T-cell (primary cell): ENCODE measurements at regions of chr1 and their contacts with region 1.

Region 1: GRCh38 chr1:35320937-35321336 is 52.4 kb downstream of the ZMYM4 start:
- DNase-seq: no peak
- ATAC-seq: no peak
- H3K4me3 ChIP-seq: no peak overlapping the region
- H3K4me3 Mint-ChIP-seq: no peak overlapping the region
- H3K27ac ChIP-seq: no peak overlapping the region
- H3K27ac Mint-ChIP-seq: no peak overlapping the region
- H3K4me1 ChIP-seq: no peaks in the 10 kb centered on the region
- H3K4me1 Mint-ChIP-seq: peaks cover 18 to 32% (median 22%) of the 10 kb centered on the region in 3 donors
- H3K27me3 ChIP-seq: no peaks in the 10 kb centered on the region
- H3K27me3 Mint-ChIP-seq: no peaks in the 10 kb centered on the region

Region 2: GRCh38 chr1:35345439-35345981 is 24.6 kb after region 1 on chr1:
- CTCF ChIA-PET with region 1: no interaction called
- POLR2A ChIA-PET with region 1: interaction called in 1 of 2 experiments, 10 read pairs
- DNase-seq: no peak
- ATAC-seq: no peak
- H3K4me3 ChIP-seq: no peak overlapping the region
- H3K4me3 Mint-ChIP-seq: no peak overlapping the region
- H3K27ac ChIP-seq: no peak overlapping the region
- H3K27ac Mint-ChIP-seq: no peak overlapping the region
- H3K4me1 ChIP-seq: peaks cover 0 to 4% of the 10 kb centered on the region in 2 experiments
- H3K4me1 Mint-ChIP-seq: peaks cover 12 to 18% (median 17%) of the 10 kb centered on the region in 3 donors
- H3K27me3 ChIP-seq: no peaks in the 10 kb centered on the region
- H3K27me3 Mint-ChIP-seq: no peaks in the 10 kb centered on the region

Region 3: GRCh38 chr1:35426097-35426586 is 105.2 kb after region 1 on chr1:
- CTCF ChIA-PET with region 1: no interaction called
- POLR2A ChIA-PET with region 1: no interaction called
- DNase-seq: no peak
- ATAC-seq: no peak
- H3K4me3 ChIP-seq: no peak overlapping the region
- H3K4me3 Mint-ChIP-seq: no peak overlapping the region
- H3K27ac ChIP-seq: no peak overlapping the region
- H3K27ac Mint-ChIP-seq: peak overlapping the region in 1 of 2 donors; percentile 62
- H3K4me1 ChIP-seq: no peaks in the 10 kb centered on the region
- H3K4me1 Mint-ChIP-seq: peaks cover 1 to 9% (median 3%) of the 10 kb centered on the region in 3 donors
- H3K27me3 ChIP-seq: no peaks in the 10 kb centered on the region
- H3K27me3 Mint-ChIP-seq: no peaks in the 10 kb centered on the region